CD4-positive, alpha-beta memory T cell (primary cell): ENCODE measurements at regions of chr7 and their contacts with region 1.

Region 1: GRCh38 chr7:7681179-7681935 is 37.0 kb downstream of the RPA3 start:
- DNase-seq: peak; percentile 47 to 62 (median 54)
- H3K4me3 ChIP-seq: no peak overlapping the region
- H3K4me3 Mint-ChIP-seq: peak overlapping the region in 3 of 8 donors; percentile 21 to 51 (median 35)
- H3K27ac ChIP-seq: no peak overlapping the region
- H3K27ac Mint-ChIP-seq: peak overlapping the region in 5 of 7 donors; percentile 41 to 59 (median 45)
- H3K4me1 ChIP-seq: peaks cover 15% of the 10 kb centered on the region
- H3K4me1 Mint-ChIP-seq: peaks cover 18 to 35% (median 24%) of the 10 kb centered on the region in 4 donors
- H3K27me3 ChIP-seq: no peaks in the 10 kb centered on the region
- H3K27me3 Mint-ChIP-seq: no peaks in the 10 kb centered on the region

Region 2: DNA sequence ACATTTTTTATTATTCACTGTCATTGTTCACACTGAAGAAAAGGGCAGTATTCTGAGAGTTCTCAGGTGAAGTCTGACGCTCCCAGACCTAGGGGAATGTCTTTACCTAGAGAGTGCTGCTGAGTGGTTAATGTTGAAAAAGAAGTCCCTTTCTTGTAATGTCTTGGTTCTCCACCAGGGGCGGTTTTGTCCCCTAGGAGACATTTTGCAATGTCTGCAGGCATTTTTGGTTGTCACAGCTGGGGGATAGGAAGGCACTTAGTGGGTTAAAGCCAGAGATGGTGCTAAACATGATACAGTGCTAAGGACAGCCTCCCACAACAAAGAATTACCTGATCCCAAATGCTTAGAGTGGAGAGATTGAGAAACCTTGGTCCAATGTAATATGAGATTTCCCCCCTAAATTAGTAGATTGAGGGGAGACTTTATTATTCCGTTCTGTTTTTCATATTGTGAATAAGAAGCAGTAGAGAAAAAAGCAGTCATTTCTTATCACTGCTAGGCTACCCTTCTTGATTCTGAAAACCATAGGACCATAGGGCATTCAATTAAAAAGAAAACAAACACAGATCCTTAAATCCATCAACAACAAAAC is 27.7 kb before region 1 on chr7:
- CTCF ChIA-PET with region 1: no interaction called
- POLR2A ChIA-PET with region 1: no interaction called
- intact Hi-C with region 1: no loop called
- DNase-seq: peak in 1 of 5 donors; percentile 16
- H3K4me3 ChIP-seq: no peak overlapping the region
- H3K4me3 Mint-ChIP-seq: no peak overlapping the region
- H3K27ac ChIP-seq: no peak overlapping the region
- H3K27ac Mint-ChIP-seq: peak overlapping the region in 1 of 7 donors; percentile 59
- H3K4me1 ChIP-seq: peaks cover 23% of the 10 kb centered on the region
- H3K4me1 Mint-ChIP-seq: peaks cover 25 to 62% (median 36%) of the 10 kb centered on the region in 4 donors
- H3K27me3 ChIP-seq: no peaks in the 10 kb centered on the region
- H3K27me3 Mint-ChIP-seq: no peaks in the 10 kb centered on the region

Region 3: DNA sequence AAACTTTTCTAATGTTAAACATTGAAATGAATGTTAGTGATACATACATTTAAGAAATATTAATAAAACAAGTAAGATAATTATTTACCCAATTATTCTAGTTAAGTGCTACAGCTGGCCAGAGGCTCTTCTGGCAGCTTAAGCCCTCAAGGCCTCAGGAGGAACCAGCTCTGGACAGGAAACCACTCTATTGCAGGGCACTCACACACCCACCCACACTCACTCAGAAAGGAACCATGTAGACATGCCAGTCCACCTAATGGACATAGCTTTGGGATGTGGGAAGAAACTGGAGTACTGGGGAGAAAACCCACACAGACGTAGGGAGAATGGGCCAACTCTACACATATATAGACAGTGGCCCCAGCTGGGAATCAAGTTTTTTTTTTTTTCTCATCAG is 12.7 kb before region 1 on chr7:
- CTCF ChIA-PET with region 1: interaction called, 13 read pairs
- POLR2A ChIA-PET with region 1: no interaction called
- intact Hi-C with region 1: no loop called
- DNase-seq: no peak
- H3K4me3 ChIP-seq: no peak overlapping the region
- H3K4me3 Mint-ChIP-seq: no peak overlapping the region
- H3K27ac ChIP-seq: no peak overlapping the region
- H3K27ac Mint-ChIP-seq: no peak overlapping the region
- H3K4me1 ChIP-seq: peaks cover 27% of the 10 kb centered on the region
- H3K4me1 Mint-ChIP-seq: peaks cover 36 to 57% (median 43%) of the 10 kb centered on the region in 4 donors
- H3K27me3 ChIP-seq: no peaks in the 10 kb centered on the region
- H3K27me3 Mint-ChIP-seq: no peaks in the 10 kb centered on the region

Region 4: DNA sequence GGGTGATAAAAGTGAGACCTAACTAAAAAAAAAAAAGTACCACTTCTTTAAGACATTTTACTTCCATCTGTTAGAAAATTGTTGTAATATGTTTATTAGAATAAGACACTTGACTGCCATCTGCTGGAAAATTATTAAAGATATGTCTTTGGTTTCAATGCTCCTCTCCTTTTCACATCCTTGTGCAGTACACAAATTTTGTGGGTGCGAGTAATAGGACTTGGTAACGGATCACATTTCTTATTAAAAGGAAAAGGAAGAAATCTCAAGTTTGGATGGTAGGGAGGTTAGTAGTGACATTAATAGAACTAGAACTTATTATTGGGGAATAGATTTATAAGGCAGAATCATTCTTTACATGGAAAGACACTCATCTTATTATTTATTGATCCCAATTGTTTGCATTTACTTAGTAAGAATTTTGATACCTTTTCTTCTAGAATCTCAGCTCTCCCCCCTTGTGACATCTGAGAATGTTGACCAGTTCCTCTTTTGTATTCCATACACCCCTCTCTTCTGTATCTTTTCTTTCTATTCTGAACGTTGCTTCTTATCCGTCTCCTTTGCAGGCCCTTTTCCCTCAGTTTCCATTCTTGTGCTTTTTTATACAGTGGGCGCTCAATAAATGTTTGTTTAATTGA is 80.1 kb after region 1 on chr7:
- CTCF ChIA-PET with region 1: interaction called, 35 read pairs
- POLR2A ChIA-PET with region 1: interaction called, 9 read pairs
- intact Hi-C with region 1: loop called (anchors 1 kb)
- DNase-seq: peak in 4 of 5 donors; percentile 46 to 56 (median 49)
- H3K4me3 ChIP-seq: peak overlapping the region; percentile 4 to 75
- H3K4me3 Mint-ChIP-seq: peak overlapping the region; percentile 81 to 98 (median 92)
- H3K27ac ChIP-seq: peak overlapping the region; percentile 67
- H3K27ac Mint-ChIP-seq: peak overlapping the region; percentile 89 to 98 (median 95)
- H3K4me1 ChIP-seq: peaks cover 35% of the 10 kb centered on the region
- H3K4me1 Mint-ChIP-seq: peaks cover 35 to 40% (median 39%) of the 10 kb centered on the region in 4 donors
- H3K27me3 ChIP-seq: no peaks in the 10 kb centered on the region
- H3K27me3 Mint-ChIP-seq: no peaks in the 10 kb centered on the region

Region 5: DNA sequence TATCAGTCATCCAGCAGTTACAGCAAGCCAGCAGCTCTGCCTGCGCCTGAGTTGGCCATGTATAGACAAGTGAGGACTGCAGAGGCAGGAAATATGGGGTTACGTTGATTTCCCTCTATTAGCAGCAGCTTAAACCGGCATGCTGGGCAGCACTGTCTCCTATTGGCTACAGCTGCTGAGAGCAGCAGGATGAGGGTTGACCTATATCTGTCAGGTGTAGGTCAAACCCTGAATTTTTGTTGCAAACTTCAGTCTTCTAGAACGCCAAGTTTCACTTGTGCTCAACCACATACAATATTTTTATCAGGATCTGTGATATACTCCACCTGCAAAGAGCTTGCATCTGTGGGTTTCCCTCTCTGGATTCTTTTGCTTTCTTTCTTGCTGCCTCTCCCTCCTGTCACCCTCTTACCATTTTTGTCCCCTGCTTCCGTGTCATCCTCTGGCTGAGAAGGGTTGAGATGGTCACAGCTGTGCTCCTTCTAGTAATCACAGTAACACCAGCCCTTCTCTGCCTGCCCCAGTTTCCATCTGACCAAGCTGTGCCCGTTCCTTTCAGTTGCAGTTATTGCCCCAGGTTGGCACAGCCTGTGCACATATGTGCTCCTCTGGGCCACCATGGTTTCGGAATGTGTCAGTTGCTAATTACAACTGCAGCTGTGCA is 263.4 kb after region 1 on chr7:
- CTCF ChIA-PET with region 1: interaction called, 10 read pairs
- POLR2A ChIA-PET with region 1: no interaction called
- intact Hi-C with region 1: no loop called
- DNase-seq: peak; percentile 64 to 77 (median 75)
- H3K4me3 ChIP-seq: peak overlapping the region; percentile 26 to 29
- H3K4me3 Mint-ChIP-seq: peak overlapping the region; percentile 70 to 89 (median 82)
- H3K27ac ChIP-seq: peak overlapping the region; percentile 59
- H3K27ac Mint-ChIP-seq: peak overlapping the region; percentile 78 to 97 (median 90)
- H3K4me1 ChIP-seq: peaks cover 42% of the 10 kb centered on the region
- H3K4me1 Mint-ChIP-seq: peaks cover 21 to 51% (median 28%) of the 10 kb centered on the region in 4 donors
- H3K27me3 ChIP-seq: no peaks in the 10 kb centered on the region
- H3K27me3 Mint-ChIP-seq: no peaks in the 10 kb centered on the region

Region 6: DNA sequence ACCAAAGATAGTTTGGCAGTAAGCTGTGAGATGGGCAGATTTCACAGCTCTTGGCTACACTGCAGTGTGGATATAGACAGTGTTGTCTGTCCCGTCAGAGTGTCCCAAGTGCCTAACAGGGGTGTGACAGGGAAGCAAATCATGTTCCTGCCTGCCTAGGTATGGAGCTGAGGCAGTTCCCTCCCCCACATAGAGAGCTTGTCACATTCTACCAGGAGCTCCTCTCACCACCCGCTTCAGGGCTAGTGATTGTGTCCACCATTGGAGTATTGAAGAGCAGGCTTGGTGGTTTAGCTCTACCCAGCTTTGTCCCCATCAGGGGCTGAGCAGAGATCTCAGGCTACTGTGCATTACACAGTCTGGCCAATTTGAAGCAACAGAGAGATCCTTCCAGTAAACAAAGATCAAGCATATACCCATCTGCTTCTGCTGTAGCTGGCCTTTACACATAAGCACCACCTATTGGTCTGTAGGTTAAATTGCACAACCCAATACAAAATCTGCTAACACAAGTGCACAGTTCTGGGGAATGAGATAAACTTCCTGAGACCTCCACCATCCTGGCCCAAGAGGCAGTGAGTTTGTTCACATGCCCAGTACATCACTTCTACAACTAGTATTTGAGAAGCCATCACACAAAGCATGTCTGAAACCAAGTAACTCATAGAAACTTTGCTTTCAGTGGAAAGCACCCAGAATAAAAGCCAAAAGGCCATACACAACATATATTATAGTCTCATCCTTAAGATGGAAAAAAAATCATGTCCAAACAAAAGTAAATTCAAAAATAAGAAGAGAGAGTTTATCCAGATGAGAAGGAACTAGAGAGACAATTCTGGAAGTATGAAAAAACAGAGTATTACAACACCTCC is 354.5 kb after region 1 on chr7:
- CTCF ChIA-PET with region 1: interaction called, 34 read pairs
- POLR2A ChIA-PET with region 1: interaction called, 11 read pairs
- intact Hi-C with region 1: loop called (anchors 1 kb)
- DNase-seq: peak in 4 of 5 donors; percentile 32 to 51 (median 41)
- H3K4me3 ChIP-seq: no peak overlapping the region
- H3K4me3 Mint-ChIP-seq: no peak overlapping the region
- H3K27ac ChIP-seq: no peak overlapping the region
- H3K27ac Mint-ChIP-seq: peak overlapping the region; percentile 16 to 86 (median 58)
- H3K4me1 ChIP-seq: peaks cover 20% of the 10 kb centered on the region
- H3K4me1 Mint-ChIP-seq: peaks cover 27 to 41% (median 30%) of the 10 kb centered on the region in 4 donors
- H3K27me3 ChIP-seq: no peaks in the 10 kb centered on the region
- H3K27me3 Mint-ChIP-seq: no peaks in the 10 kb centered on the region

Region 7: DNA sequence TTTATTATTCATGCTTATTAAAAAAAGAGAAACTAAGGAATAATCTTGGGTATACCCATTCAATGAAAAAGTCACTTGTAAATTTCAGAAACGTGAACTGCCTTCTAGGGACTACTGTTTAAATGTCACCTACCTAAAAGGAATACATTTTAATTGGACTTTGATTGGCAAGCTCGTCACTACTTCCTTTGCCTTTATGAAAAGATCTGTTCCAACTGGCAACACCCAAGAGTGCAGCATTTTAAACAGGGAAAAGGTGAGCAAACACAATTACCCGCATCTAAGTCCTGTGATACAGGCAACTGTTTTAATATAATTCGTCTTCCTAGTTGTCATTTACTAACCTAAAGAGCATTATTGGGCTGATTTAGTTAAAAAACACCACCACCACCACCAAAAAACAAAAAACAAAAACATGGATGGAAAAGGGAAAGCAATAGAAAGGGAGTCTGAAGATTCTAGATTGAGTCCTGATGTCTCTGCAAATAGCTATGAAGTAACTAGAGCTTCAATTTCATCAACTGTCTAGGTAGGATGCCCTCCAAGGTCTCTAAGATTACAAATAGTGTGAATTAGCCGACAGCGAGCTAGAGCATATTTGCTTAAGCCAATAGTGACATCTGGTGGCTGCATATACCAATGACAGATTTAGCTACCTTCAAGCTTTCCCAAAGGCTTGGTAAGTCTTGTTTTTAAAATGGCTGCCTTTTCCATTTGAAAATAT is 614.4 kb after region 1 on chr7:
- CTCF ChIA-PET with region 1: interaction called, 5 read pairs
- POLR2A ChIA-PET with region 1: no interaction called
- intact Hi-C with region 1: loop called (anchors 1 kb)
- DNase-seq: peak; percentile 44 to 54 (median 52)
- H3K4me3 ChIP-seq: no peak overlapping the region
- H3K4me3 Mint-ChIP-seq: no peak overlapping the region
- H3K27ac ChIP-seq: no peak overlapping the region
- H3K27ac Mint-ChIP-seq: no peak overlapping the region
- H3K4me1 ChIP-seq: no peaks in the 10 kb centered on the region
- H3K4me1 Mint-ChIP-seq: peaks cover 0 to 1% (median 0%) of the 10 kb centered on the region in 4 donors
- H3K27me3 ChIP-seq: no peaks in the 10 kb centered on the region
- H3K27me3 Mint-ChIP-seq: peaks cover 8 to 12% of the 10 kb centered on the region in 2 donors